ENCODE measurements at regions of chr1 and their contacts with region 1.

Region 1: DNA sequence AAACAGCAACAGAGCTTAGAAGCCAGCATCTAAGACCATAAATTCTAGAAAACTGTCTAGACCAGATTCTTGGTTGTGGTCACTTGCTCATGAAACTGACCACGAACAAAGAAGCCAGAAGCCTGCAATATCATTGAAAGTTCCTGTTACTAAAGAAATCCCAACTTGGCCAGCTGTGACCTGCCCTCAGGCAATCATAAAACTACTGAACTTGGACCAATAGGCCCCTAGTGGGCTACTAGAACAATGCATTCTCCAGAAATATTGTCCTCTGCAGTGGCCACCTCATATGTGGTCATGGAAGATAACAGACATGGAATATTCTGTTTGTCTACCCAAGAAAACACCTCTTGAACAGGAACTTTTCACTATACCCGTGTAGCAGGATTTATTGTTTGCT is 87.7 kb downstream of the SPATA17 start:
- DNase-seq: no peak
- ATAC-seq: no peak
- H3K4me3 ChIP-seq: no peak overlapping the region
- H3K27ac ChIP-seq: no peak overlapping the region
- H3K4me1 ChIP-seq: no peaks in the 10 kb centered on the region
- H3K27me3 ChIP-seq: no peaks in the 10 kb centered on the region
- CTCF ChIP-seq: no peak

Region 2: DNA sequence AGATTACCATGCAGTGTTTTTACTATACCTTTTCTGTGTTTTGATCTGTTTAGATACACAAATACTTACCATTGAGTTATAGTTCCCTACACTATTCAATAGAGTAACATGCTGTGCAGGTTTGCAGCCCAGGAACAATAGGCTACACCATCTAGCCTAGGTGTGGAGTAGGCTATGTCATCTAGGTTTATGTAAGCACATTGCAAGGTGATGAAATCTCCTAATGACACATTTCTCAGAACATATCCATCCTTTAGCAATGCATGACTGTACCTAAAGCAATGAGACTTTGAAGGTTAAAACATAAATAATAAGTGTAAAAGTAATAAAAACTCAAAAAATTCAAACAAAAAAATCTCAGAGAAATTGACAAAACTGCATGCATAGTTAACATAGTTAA is 1654.2 kb before region 1 on chr1:
- intact Hi-C with region 1: loop called in 1 of 2 experiments (anchors 5 kb)
- DNase-seq: no peak
- ATAC-seq: no peak
- H3K4me3 ChIP-seq: no peak overlapping the region
- H3K27ac ChIP-seq: no peak overlapping the region
- H3K4me1 ChIP-seq: no peaks in the 10 kb centered on the region
- H3K27me3 ChIP-seq: no peaks in the 10 kb centered on the region
- CTCF ChIP-seq: no peak

Region 3: DNA sequence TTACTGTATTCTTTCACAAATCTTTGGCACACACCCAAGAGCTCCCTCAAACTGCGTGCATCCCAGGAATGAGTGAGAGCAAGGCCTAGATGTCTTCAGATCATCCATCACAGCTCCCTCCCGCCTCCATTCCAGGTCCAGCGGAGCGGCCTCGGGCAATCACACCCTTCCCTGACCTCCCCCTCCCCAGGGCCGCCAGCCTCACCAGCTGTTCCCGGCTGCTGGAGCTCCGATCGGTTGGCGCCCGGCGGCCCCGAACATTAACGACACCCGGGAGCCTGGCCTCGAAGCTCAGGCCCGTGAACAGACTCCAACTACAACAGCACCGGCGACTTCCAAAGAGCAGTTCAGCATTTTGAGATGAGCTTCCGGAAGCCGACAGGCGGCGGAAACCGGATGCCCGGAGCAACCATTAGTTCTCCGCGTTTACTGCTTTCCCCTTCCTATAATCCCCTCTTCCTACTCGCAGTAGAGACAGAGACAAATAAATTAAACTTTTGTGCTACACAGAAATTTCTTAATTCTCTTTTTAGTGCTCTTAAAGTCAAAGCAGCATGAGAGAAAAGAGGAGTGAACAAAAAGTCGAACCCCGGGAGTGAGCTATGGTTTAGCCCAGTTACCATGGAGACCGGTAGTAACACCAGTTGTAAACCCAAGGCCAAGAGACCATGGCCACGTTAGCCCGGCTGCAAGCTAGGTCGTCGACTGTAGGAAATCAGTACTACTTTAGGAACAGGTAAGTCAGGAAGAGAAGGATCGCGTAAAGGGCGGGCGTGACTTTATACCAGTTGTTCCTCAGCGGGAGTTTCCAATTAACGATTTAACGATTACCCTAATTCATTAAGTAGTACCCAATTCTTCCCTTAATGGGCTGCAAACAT is 87.9 kb before region 1 on chr1 and contains the starts of genes GPATCH2 and SPATA17:
- intact Hi-C with region 1: no loop called
- DNase-seq: peak; percentile 76 to 88
- ATAC-seq: peak; percentile 89 to 99 (median 96)
- H3K4me3 ChIP-seq: peak within 1 kb of the TSS; percentile 78
- H3K27ac ChIP-seq: peak within 1 kb of the TSS; percentile 90
- H3K4me1 ChIP-seq: peaks cover 16% of the 10 kb centered on the region
- H3K27me3 ChIP-seq: no peaks in the 10 kb centered on the region
- CTCF ChIP-seq: peak; percentile 42
- total RNA-seq, gene GPATCH2: 3.1 to 6.1 (median 4.3) TPM
- total RNA-seq, gene SPATA17: 0.34 to 0.42 TPM in 2 of 4 donors, not detected in the others